ENCODE measurements at regions of chr4 and their contacts with region 1.

Region 1: GRCh38 chr4:7803992-7804755 is 135.5 kb downstream of the AFAP1 start:
- DNase-seq: peak; percentile 93
- H3K4me3 ChIP-seq: no peak overlapping the region
- H3K27ac ChIP-seq: peak overlapping the region; percentile 78 to 86 (median 81)
- H3K4me1 ChIP-seq: peaks cover 0 to 52% (median 46%) of the 10 kb centered on the region in 4 donors
- H3K27me3 ChIP-seq: no peaks in the 10 kb centered on the region
- CTCF ChIP-seq: peak; percentile 89 to 99 (median 95)
- EP300 ChIP-seq: no peak
- POLR2A ChIP-seq: no peak

Region 2: DNA sequence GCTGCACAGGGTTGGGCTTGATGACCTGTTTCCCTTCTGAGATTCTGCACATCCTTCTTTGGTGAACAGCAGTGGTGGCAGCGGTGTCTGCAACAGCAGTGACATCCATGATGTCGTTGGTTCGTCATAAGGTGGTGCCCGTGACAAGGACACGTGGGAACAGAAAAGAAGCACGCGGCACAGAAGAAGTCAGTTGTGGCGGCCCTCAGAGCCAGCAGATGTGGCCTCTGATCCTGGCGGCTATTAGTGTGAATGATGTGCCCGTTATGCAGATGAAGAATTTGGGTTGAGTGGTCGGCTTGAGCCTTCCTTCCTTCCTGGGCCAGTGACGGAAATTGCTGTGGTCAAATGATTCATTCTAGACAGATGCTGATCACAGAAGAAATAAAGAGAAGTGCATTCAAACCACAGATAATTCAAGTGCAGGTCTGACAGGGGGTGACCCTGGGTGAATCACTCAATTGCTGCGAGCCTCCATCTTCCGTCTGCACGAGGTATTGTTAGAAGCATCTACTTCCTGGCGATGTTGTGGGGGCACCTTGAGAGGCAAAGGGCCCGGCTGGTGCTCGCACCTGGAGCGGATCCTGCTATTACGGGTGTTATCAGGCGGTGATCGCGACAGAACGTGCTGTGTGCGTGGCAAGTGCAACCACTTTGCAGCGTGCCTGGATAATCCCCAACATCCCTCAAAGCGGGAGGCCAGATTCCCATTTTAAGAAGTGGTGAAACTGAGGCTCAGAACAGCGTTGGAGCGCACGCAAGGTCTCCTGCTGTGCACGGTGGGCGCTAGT is 154.2 kb before region 1 on chr4:
- intact Hi-C with region 1: no loop called
- DNase-seq: peak; percentile 62
- H3K4me3 ChIP-seq: no peak overlapping the region
- H3K27ac ChIP-seq: peak overlapping the region in 2 of 4 donors; percentile 25 to 32
- H3K4me1 ChIP-seq: peaks cover 0 to 8% (median 3%) of the 10 kb centered on the region in 4 donors
- H3K27me3 ChIP-seq: no peaks in the 10 kb centered on the region
- CTCF ChIP-seq: no peak
- EP300 ChIP-seq: peak in 1 of 4 donors; percentile 21
- POLR2A ChIP-seq: no peak

Region 3: GRCh38 chr4:7843831-7844593 is 39.8 kb after region 1 on chr4:
- intact Hi-C with region 1: loop called (anchors 2 kb)
- DNase-seq: peak; percentile 86
- H3K4me3 ChIP-seq: no peak overlapping the region
- H3K27ac ChIP-seq: peak overlapping the region; percentile 87 to 92 (median 92)
- H3K4me1 ChIP-seq: peaks cover 0 to 54% (median 52%) of the 10 kb centered on the region in 4 donors
- H3K27me3 ChIP-seq: no peaks in the 10 kb centered on the region
- CTCF ChIP-seq: peak; percentile 17 to 65 (median 34)
- EP300 ChIP-seq: no peak
- POLR2A ChIP-seq: no peak

Region 4: DNA sequence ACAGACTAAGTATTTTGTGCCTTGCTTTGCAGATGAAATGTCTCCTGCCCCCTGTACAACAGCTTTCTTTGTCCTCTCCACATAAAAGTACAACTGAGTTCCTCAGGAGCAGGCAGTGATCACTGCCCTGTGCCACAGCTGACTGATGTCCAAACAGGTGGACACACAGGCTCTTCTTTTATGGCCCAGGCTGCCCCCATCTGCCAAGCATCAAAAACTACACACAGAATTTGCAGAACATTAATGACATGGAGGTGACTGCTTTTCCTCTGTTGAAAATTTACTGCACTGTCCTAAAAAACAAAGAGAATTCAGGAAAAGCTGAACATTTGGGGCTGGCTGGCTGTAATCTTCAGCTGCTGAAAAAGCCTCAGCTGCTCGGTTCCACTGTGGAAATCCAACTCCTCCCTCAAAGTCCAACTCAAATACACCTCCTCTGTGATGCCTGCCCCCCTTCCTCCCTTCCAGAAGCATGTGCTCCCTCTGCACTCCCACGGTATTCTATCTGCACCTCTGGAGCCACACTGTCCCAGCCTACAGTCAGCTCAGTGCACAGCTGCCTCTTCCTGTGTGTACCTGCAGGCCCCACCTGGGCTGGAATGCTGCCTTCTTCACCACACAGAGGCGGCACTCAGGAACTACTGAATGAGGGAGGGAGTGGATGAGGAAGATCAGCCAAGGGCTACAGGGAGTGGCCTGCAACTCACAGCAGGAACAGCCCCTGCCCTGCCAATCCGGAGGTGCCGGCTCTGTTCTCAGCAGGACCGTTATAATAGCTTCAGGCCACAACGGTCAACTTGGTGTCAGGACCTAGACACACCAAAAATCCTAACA is 125.2 kb after region 1 on chr4:
- intact Hi-C with region 1: loop called (anchors 2 kb)
- DNase-seq: peak; percentile 69
- H3K4me3 ChIP-seq: no peak overlapping the region
- H3K27ac ChIP-seq: peak overlapping the region; percentile 39 to 58 (median 50)
- H3K4me1 ChIP-seq: peaks cover 0 to 57% (median 42%) of the 10 kb centered on the region in 4 donors
- H3K27me3 ChIP-seq: no peaks in the 10 kb centered on the region
- CTCF ChIP-seq: peak in 1 of 4 experiments; percentile 37
- EP300 ChIP-seq: no peak
- POLR2A ChIP-seq: no peak

Region 5: DNA sequence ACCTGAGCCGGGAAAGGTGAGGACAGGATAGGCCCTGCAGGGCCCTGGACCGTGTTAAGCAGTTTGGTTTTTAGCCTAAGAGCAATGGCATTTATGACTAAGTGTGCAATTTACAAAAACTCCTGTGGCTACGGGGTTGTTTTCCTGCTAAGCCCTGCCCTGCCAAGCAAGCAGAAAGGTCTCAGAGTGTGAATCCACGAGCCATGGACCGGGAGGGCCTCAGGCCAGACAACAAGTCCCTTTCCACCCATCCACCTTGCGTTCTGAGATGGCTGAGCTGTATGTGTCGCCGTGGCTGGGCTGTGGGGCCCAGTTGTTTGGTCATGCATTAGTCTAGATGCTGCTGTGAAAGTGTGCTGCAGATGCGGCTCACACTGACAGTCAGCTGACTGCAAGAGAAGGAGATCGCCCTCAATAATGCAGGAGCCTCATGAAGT is 169.4 kb after region 1 on chr4:
- intact Hi-C with region 1: loop called (anchors 5 kb)
- DNase-seq: no peak
- H3K4me3 ChIP-seq: no peak overlapping the region
- H3K27ac ChIP-seq: peak overlapping the region in 3 of 4 donors; percentile 39 to 65 (median 64)
- H3K4me1 ChIP-seq: peaks cover 0 to 58% (median 46%) of the 10 kb centered on the region in 4 donors
- H3K27me3 ChIP-seq: no peaks in the 10 kb centered on the region
- CTCF ChIP-seq: no peak
- EP300 ChIP-seq: no peak
- POLR2A ChIP-seq: no peak

Region 6: GRCh38 chr4:8639777-8640720 is 835.9 kb after region 1 on chr4:
- intact Hi-C with region 1: no loop called
- DNase-seq: peak; percentile 61
- H3K4me3 ChIP-seq: no peak overlapping the region
- H3K27ac ChIP-seq: no peak overlapping the region
- H3K4me1 ChIP-seq: no peaks in the 10 kb centered on the region
- H3K27me3 ChIP-seq: peaks cover 0 to 7% (median 0%) of the 10 kb centered on the region in 3 donors
- CTCF ChIP-seq: no peak
- EP300 ChIP-seq: no peak
- POLR2A ChIP-seq: no peak

Measured in sigmoid colon (tissue), 7 donors.